ENCODE measurements at regions of chr3 and their contacts with region 1.

Region 1: GRCh38 chr3:187000711-187001151 is 70.4 kb downstream of the ST6GAL1 start:
- DNase-seq: peak; percentile 99
- ATAC-seq: peak; percentile 79
- H3K4me3 ChIP-seq: peak overlapping the region; percentile 46; the same call in 1 of the 2 replicates
- H3K27ac ChIP-seq: peak overlapping the region; percentile 91
- H3K4me1 ChIP-seq: peaks cover 51% of the 10 kb centered on the region
- H3K27me3 ChIP-seq: no peaks in the 10 kb centered on the region
- CTCF ChIP-seq: no peak
- EP300 ChIP-seq: peak; percentile 99 to 100
- POLR2A ChIP-seq: peak; percentile 66
- RAD21 ChIP-seq: no peak

Region 2: DNA sequence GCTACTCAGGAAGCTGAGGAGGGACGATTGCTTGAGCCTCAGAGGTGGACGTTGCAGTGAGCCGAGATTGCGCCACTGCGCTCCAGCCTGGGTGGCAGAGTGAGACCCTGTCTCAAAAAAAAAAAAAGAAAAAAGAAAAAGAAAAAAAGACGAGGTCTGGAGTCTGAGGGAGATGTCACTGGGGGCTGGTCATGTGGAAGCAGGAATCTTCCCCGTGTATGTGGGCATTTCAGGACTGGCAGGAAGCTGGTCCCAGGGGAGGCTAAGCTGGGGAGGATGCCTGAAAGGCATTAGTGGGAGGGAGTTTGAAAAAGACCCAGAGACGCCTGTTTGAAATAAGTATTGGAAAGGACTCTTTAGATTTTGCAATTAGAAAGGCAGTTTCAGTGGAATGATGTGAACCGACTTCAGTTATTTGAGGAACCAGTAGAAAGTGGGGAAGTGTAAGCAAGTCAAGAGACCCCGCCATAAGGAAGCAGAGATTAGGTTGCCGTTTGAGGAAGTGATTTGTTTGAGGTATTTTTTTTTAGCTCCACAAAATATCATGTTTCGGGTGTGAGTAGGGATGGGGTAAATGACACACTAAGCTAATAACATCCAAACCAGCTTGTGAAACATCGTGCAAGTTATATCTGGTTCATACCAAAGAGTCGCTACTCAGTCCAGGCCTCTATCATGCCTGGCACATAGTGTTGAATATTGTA is 14.9 kb before region 1 on chr3:
- CTCF ChIA-PET with region 1: interaction called, 9 read pairs
- POLR2A ChIA-PET with region 1: interaction called, 37 read pairs
- RAD21 ChIA-PET with region 1: interaction called, 43 read pairs
- SMC1A ChIA-PET with region 1: interaction called, 83 read pairs
- in situ Hi-C with region 1: no loop called
- intact Hi-C with region 1: no loop called
- DNase-seq: peak; percentile 56
- ATAC-seq: peak; percentile 38
- H3K4me3 ChIP-seq: no peak overlapping the region; the same call in 1 of the 2 replicates
- H3K27ac ChIP-seq: peak overlapping the region; percentile 82
- H3K4me1 ChIP-seq: peaks cover 43% of the 10 kb centered on the region
- H3K27me3 ChIP-seq: no peaks in the 10 kb centered on the region
- CTCF ChIP-seq: no peak
- EP300 ChIP-seq: no peak
- POLR2A ChIP-seq: no peak
- RAD21 ChIP-seq: no peak

Region 3: DNA sequence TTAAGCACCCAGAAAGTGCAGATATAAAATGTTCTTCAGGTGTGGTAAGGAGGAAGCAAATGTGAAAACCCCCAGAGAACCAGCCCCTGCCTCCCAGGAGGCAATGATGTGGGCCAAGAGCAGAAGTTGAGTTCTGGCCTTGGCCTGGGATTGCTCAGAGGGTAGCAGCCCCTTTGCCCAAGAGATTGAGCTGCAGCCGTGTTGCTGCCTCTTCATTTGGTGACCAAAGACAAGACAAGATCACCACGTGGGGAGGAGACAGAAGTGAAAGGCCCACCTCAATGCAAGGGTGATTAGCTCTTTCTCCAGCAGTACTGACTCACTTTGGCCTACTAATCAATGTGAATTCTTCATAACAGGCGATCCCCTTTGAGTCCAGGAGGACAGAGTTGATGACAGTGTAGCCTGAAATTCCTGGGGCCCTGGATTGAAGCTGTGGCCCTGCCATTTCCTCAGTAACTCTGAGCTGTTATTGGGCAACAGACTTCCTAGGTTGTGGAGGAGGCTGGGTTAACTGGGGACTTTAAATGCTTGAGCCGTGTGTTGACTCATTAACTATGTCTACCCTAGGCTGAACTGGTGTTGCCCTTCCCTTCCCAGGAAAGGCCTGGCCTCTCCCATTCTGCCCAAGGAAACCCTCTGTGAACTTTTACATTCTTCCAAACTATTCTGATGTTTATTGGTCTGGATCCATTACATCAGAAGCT is 16.1 kb after region 1 on chr3:
- CTCF ChIA-PET with region 1: interaction called, 36 read pairs
- POLR2A ChIA-PET with region 1: interaction called, 137 read pairs
- RAD21 ChIA-PET with region 1: interaction called, 46 read pairs
- SMC1A ChIA-PET with region 1: interaction called, 70 read pairs
- in situ Hi-C with region 1: no loop called
- intact Hi-C with region 1: loop called (anchors 1 kb)
- DNase-seq: no peak
- ATAC-seq: peak; percentile 68
- H3K4me3 ChIP-seq: peak overlapping the region; percentile 11; the same call in 1 of the 2 replicates
- H3K27ac ChIP-seq: peak overlapping the region; percentile 72
- H3K4me1 ChIP-seq: peaks cover 80% of the 10 kb centered on the region
- H3K27me3 ChIP-seq: no peaks in the 10 kb centered on the region
- CTCF ChIP-seq: no peak
- EP300 ChIP-seq: no peak
- POLR2A ChIP-seq: peak; percentile 46; the same call in 1 of the 2 replicates
- RAD21 ChIP-seq: no peak

Region 4: GRCh38 chr3:187031934-187032333 is 31.2 kb after region 1 on chr3:
- CTCF ChIA-PET with region 1: interaction called, 19 read pairs
- POLR2A ChIA-PET with region 1: interaction called, 137 read pairs
- RAD21 ChIA-PET with region 1: interaction called, 183 read pairs
- SMC1A ChIA-PET with region 1: interaction called, 150 read pairs
- in situ Hi-C with region 1: no loop called
- intact Hi-C with region 1: loop called (anchors 1 kb)
- DNase-seq: no peak
- ATAC-seq: peak; percentile 4; the same call in 2 of the 3 replicates
- H3K4me3 ChIP-seq: peak overlapping the region; percentile 47; the same call in 1 of the 2 replicates
- H3K27ac ChIP-seq: peak overlapping the region; percentile 57
- H3K4me1 ChIP-seq: peaks cover 43% of the 10 kb centered on the region
- H3K27me3 ChIP-seq: no peaks in the 10 kb centered on the region
- CTCF ChIP-seq: no peak
- EP300 ChIP-seq: no peak
- POLR2A ChIP-seq: 0 out of 2 replicates have a peak, but pooled peaks have one; percentile 16
- RAD21 ChIP-seq: no peak

Region 5: DNA sequence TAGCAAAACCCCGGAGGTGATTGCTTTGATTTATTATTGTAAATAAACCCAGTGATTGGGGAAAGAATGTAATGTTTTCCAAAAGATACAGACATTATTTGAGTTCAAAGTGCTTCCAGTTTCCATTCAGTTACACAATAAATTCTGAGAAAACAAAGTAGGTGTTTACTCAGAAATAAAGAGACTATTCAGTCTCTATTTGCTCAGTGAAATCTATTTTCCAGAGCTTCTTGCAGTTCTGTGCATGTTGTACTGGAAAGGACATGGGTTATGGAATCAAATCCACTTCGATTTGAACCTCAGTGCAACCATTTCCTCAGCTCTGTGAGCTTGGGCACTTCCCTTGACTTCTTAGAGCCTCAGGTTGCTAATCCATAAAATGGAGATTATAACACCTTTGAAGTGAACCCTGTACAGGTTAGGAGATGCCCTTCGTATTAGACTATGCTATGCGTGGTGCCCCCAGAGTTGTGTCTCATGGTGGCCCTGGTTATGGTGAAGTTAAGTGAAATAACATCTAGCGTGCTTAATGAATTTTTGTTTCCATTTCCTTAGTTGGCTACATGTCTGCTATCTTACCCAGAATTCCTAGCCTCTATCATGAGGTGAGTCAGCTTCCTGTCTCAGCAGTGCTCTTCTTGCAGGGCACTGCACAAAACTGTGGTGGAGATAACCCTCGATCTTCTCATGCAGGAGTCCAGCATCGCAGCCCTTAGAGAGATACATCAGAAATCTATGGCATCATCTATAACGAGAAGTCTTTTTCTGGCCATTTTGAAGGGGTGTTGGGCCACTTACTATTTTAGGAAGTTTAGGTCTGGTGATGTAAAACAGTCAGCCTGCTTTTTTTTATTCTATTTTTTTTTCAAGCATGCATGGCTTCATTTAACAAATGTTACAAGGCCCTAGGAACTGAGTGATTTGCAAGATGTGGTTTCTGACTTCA is 40.9 kb after region 1 on chr3:
- CTCF ChIA-PET with region 1: interaction called, 4 read pairs
- POLR2A ChIA-PET with region 1: interaction called, 10 read pairs
- RAD21 ChIA-PET with region 1: interaction called, 9 read pairs
- SMC1A ChIA-PET with region 1: interaction called, 10 read pairs
- in situ Hi-C with region 1: no loop called
- intact Hi-C with region 1: no loop called
- DNase-seq: no peak
- ATAC-seq: peak; percentile 51
- H3K4me3 ChIP-seq: no peak overlapping the region; the same call in 1 of the 2 replicates
- H3K27ac ChIP-seq: peak overlapping the region; percentile 90
- H3K4me1 ChIP-seq: peaks cover 59% of the 10 kb centered on the region
- H3K27me3 ChIP-seq: no peaks in the 10 kb centered on the region
- CTCF ChIP-seq: no peak
- EP300 ChIP-seq: no peak
- POLR2A ChIP-seq: no peak
- RAD21 ChIP-seq: peak; percentile 1; the same call in 1 of the 2 replicates

Region 6: GRCh38 chr3:187066228-187066995 is 65.7 kb after region 1 on chr3:
- CTCF ChIA-PET with region 1: interaction called, 4 read pairs
- POLR2A ChIA-PET with region 1: interaction called, 6 read pairs
- RAD21 ChIA-PET with region 1: interaction called, 28 read pairs
- SMC1A ChIA-PET with region 1: interaction called, 7 read pairs
- in situ Hi-C with region 1: no loop called
- intact Hi-C with region 1: loop called (anchors 1 kb)
- DNase-seq: no peak
- ATAC-seq: peak; percentile 67
- H3K4me3 ChIP-seq: no peak overlapping the region
- H3K27ac ChIP-seq: peak overlapping the region; percentile 82
- H3K4me1 ChIP-seq: peaks cover 41% of the 10 kb centered on the region
- H3K27me3 ChIP-seq: no peaks in the 10 kb centered on the region
- CTCF ChIP-seq: peak; percentile 34 to 71 (median 48); a peak in 5 of 6 replicates
- EP300 ChIP-seq: no peak
- POLR2A ChIP-seq: peak; percentile 22; the same call in 1 of the 2 replicates
- RAD21 ChIP-seq: peak; percentile 71

Region 7: GRCh38 chr3:187079090-187080022 is 78.6 kb after region 1 on chr3:
- CTCF ChIA-PET with region 1: no interaction called
- POLR2A ChIA-PET with region 1: no interaction called
- RAD21 ChIA-PET with region 1: no interaction called
- SMC1A ChIA-PET with region 1: no interaction called
- in situ Hi-C with region 1: no loop called
- intact Hi-C with region 1: no loop called
- DNase-seq: no peak
- ATAC-seq: peak; percentile 39
- H3K4me3 ChIP-seq: no peak overlapping the region
- H3K27ac ChIP-seq: no peak overlapping the region
- H3K4me1 ChIP-seq: no peaks in the 10 kb centered on the region
- H3K27me3 ChIP-seq: no peaks in the 10 kb centered on the region
- CTCF ChIP-seq: no peak
- EP300 ChIP-seq: no peak
- POLR2A ChIP-seq: peak; percentile 62; the same call in 1 of the 2 replicates
- RAD21 ChIP-seq: no peak

Measured in GM12878 (cell line).